MCF 10A (cell line): ENCODE measurements at regions of chr1 and their contacts with region 1.

Region 1: DNA sequence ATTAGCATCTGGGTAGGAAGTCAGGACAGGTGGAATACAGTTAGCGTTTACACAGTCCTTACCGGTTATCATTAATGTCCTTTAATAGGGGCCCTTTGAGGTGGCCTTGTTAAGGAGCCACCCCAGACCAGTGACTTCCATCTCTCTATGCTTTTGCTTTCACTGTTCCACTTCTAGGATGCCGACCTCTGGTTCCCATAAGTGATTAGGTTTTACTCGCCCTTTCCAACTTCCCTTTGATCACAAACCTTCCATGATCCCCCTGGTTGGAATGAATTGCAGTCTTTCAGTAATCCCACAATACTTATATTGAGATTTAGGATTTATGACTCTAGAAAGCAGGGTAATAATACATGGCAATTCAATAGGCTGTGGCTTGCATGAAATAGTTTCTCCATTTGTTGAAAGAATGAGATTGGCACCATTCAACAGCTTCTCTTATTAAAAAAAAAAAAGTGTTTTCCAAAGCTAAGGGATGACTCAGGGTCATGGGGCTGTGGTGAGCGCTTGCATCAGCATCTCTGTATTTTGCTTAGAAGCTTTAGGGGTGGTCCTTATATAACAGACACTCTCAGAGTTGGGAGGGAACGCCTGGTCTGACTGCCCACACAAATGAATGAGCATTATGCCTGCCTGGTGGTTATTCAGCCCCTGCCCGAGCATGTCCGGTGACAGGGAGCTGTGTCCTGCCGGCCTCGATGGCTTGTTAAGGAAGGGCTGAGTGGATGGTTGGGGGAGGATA is 110.5 kb downstream of the CNIH3 start:
- DNase-seq: peak; percentile 86
- H3K4me3 Mint-ChIP-seq: no peak overlapping the region
- H3K27ac Mint-ChIP-seq: peak overlapping the region; percentile 87
- H3K4me1 Mint-ChIP-seq: peaks cover 34% of the 10 kb centered on the region
- H3K27me3 Mint-ChIP-seq: no peaks in the 10 kb centered on the region
- CTCF ChIP-seq: no peak

Region 2: GRCh38 chr1:224615861-224616755 is 110.5 kb before region 1 on chr1 and contains the start of gene CNIH3:
- CTCF ChIA-PET with region 1: no interaction called
- POLR2A ChIA-PET with region 1: no interaction called
- intact Hi-C with region 1: no loop called
- DNase-seq: peak; percentile 33
- H3K4me3 Mint-ChIP-seq: peak within 1 kb of the TSS; percentile 41
- H3K27ac Mint-ChIP-seq: no peak within 1 kb of the TSS
- H3K4me1 Mint-ChIP-seq: no peaks in the 10 kb centered on the region
- H3K27me3 Mint-ChIP-seq: peaks cover 45% of the 10 kb centered on the region
- CTCF ChIP-seq: no peak
- total RNA-seq, gene CNIH3: 3.4 and 3.6 TPM in 2 replicates

Region 3: DNA sequence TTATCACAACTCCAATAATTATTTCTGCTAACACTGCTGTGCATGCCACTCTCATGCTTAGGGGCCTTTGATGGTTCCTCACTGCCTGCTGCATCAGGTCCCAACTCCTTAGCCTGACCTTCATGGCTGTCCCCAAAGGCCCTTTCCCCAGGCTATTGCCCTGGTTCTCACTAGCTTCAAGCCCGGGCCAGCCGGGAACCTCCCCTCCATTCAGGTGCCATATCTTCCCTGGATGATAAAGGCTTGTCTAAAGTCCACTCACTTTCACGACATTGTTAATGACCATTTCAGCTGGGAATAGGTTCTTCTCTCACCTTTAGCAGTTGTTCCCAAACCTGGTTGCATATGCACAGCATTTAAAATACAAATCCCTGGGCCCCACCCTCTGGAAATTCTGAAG is 14.7 kb before region 1 on chr1:
- CTCF ChIA-PET with region 1: interaction called, 9 read pairs
- POLR2A ChIA-PET with region 1: interaction called, 9 read pairs
- intact Hi-C with region 1: loop called (anchors 1 kb)
- DNase-seq: no peak
- H3K4me3 Mint-ChIP-seq: no peak overlapping the region
- H3K27ac Mint-ChIP-seq: no peak overlapping the region
- H3K4me1 Mint-ChIP-seq: peaks cover 11% of the 10 kb centered on the region
- H3K27me3 Mint-ChIP-seq: peaks cover 10% of the 10 kb centered on the region
- CTCF ChIP-seq: no peak

Region 4: DNA sequence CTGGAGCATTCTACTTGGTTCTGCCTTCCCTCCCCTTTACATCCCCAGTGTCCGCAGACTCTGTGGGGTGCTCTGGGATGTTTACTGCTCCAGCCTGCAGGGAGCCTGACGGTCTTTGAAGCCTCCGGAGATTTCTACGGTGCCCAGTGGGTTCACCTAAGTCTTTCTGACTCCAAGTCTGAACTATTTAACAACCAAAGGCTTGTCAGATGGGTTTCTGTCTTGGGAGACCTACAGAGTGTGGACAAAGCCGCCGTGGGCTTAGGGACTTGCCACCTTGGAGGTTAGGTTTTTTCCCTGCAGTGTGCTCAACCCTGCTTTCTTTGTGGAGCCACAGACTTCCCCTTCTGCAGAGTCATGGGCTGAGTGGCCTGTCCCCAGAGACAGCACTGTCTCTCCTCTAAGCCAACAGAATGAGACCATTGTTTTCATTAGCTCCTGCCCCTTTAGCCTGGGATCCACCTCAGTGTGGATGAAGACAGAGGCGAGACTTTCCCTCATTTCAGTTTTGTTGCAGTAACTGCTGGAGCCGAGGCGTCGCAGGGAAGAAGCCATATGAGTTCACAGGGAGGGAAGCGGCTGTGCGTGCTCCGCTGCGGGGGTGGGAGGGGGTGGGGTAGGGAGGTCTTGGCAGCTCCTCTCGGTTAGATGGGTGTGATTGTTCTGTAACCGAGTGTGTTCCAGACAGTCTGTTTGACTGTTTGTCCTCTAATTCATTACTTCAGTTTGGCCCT is 10.2 kb after region 1 on chr1:
- CTCF ChIA-PET with region 1: interaction called, 13 read pairs
- POLR2A ChIA-PET with region 1: no interaction called
- intact Hi-C with region 1: no loop called
- DNase-seq: peak; percentile 22
- H3K4me3 Mint-ChIP-seq: no peak overlapping the region
- H3K27ac Mint-ChIP-seq: no peak overlapping the region
- H3K4me1 Mint-ChIP-seq: peaks cover 25% of the 10 kb centered on the region
- H3K27me3 Mint-ChIP-seq: no peaks in the 10 kb centered on the region
- CTCF ChIP-seq: no peak

Region 5: DNA sequence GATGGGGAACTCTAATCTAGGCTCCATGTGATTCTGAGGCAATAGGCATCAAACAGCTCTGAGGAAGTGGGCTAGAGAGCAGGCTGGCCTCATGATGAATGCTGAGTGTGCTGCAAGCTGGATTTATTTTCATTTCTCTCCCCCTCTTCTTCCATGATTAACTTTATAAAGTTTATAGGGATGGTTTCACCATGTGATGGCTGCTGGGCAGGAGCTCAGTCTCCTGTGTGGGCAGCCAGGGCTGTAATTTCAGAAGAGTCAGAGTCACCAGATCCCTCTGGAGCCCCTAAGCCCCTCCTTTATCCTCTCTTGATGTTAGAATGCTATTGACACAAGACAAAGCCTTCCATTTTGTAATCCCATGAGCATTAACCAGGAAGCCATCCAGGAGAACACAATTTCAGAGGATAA is 33.1 kb after region 1 on chr1:
- CTCF ChIA-PET with region 1: no interaction called
- POLR2A ChIA-PET with region 1: no interaction called
- intact Hi-C with region 1: no loop called
- DNase-seq: no peak
- H3K4me3 Mint-ChIP-seq: no peak overlapping the region
- H3K27ac Mint-ChIP-seq: no peak overlapping the region
- H3K4me1 Mint-ChIP-seq: no peaks in the 10 kb centered on the region
- H3K27me3 Mint-ChIP-seq: peaks cover 1% of the 10 kb centered on the region
- CTCF ChIP-seq: no peak